ENCODE measurements at regions of chr3 and their contacts with region 1.

Region 1: DNA sequence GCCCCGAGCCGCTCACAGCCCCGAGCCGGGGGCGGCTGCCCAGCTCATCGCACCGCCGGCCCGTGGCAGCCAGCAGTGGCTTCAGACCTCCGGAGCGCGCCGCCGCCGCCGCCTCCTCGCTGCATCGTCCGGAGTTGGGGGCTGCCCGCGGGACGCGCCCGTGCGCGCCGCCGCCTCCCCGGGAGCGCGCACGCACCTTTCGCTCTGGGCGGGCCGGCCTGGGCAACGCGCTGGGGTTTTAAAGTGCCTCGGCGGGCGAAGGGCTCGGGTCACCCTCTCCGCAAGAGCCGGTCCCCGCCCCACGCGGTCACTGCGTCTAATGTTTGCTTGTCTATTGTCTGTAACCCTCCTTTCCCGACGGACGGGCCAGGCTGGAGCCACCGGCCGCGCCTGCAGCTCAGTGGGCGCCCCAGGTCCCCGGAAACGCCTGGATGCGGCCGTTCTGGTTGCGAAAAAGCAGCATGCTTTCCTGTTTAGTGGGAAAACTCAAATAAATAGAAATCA is at the start of gene RYK:
- DNase-seq: peak; percentile 90
- ATAC-seq: peak; percentile 73
- H3K4me3 ChIP-seq: peak within 1 kb of the TSS; percentile 69 to 90 (median 74)
- H3K4me3 Mint-ChIP-seq: peak within 1 kb of the TSS; percentile 93
- H3K27ac ChIP-seq: peak within 1 kb of the TSS; percentile 71 to 82
- H3K27ac Mint-ChIP-seq: peak within 1 kb of the TSS; percentile 93
- H3K4me1 ChIP-seq: peaks cover 29 to 30% of the 10 kb centered on the region in 2 donors
- H3K4me1 Mint-ChIP-seq: peaks cover 49% of the 10 kb centered on the region
- H3K27me3 ChIP-seq: no peaks in the 10 kb centered on the region
- H3K27me3 Mint-ChIP-seq: no peaks in the 10 kb centered on the region
- CTCF ChIP-seq: no peak
- total RNA-seq, gene RYK: 63.9 and 67.7 TPM in 2 replicates

Region 2: DNA sequence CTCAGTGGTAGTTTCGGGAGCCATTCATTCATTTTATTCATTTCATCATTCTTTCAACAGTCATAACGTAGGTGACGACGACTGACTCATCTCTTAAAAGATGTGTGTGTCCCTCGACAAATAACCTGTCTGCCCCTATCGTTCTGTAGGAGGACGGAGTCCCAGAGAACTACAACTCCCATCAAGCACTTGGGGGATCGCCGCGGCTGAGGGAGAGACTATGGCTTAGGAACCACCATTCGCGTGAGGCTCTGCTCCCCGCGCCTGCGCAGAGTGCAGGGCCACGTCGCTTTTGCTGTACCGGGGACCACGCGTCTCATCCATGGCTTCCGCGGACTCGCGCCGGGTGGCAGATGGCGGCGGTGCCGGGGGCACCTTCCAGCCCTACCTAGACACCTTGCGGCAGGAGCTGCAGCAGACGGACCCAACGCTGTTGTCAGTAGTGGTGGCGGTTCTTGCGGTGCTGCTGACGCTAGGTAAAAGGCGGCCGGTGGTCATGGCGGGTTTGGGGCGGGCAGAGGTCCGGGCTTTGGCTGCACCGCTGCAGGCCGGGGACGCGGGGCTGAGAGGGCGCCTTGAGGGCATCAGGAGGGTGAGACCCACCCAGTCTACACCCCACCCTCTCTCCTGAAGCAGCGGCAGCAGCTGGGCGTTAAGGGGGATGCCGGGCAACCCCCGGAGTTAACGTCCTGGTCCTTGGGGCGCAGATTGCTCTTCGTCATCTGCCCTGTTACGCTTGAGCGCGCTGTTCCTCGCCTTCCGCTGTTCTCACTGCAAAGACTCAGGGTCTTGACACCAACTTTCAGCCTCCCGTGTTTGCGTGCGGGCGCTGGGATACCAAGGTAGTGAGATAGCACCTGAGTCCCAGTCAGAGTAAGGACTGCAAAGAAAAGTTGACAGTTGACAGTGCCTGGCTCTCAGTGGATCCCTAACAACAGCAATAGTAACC is 445.0 kb before region 1 on chr3 and contains the start of gene SRPRB:
- CTCF ChIA-PET with region 1: no interaction called
- POLR2A ChIA-PET with region 1: no interaction called
- intact Hi-C with region 1: loop called (anchors 5 kb)
- DNase-seq: peak; percentile 95
- ATAC-seq: peak; percentile 98
- H3K4me3 ChIP-seq: peak within 1 kb of the TSS; percentile 56 to 95 (median 87)
- H3K4me3 Mint-ChIP-seq: peak within 1 kb of the TSS; percentile 99
- H3K27ac ChIP-seq: peak within 1 kb of the TSS; percentile 75 to 80
- H3K27ac Mint-ChIP-seq: peak within 1 kb of the TSS; percentile 94
- H3K4me1 ChIP-seq: peaks cover 11 to 13% of the 10 kb centered on the region in 2 donors
- H3K4me1 Mint-ChIP-seq: peaks cover 18% of the 10 kb centered on the region
- H3K27me3 ChIP-seq: no peaks in the 10 kb centered on the region
- H3K27me3 Mint-ChIP-seq: no peaks in the 10 kb centered on the region
- CTCF ChIP-seq: no peak
- total RNA-seq, gene SRPRB: 28.8 and 29.7 TPM in 2 replicates

Region 3: DNA sequence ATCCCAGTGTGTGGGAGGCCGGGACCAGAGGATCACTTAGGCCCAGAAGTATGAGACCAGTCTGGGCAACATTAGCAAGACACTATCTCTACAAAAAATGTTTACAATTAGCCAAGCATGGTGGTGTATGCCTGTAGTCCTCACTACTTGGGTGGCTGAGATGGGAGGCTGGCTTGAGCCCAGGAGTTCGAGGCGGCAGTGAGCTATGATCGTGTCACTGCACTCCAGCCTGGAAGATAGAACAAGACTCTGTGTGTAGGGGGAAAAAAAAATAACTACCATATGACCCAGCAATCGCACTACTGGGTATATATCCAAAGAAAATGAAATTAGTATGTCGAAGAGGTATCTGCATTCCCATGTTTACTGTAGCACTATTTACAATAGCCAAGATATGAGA is 22.7 kb before region 1 on chr3:
- CTCF ChIA-PET with region 1: interaction called, 5 read pairs
- POLR2A ChIA-PET with region 1: no interaction called
- intact Hi-C with region 1: loop called (anchors 2 kb)
- DNase-seq: no peak
- ATAC-seq: no peak
- H3K4me3 ChIP-seq: no peak overlapping the region
- H3K4me3 Mint-ChIP-seq: no peak overlapping the region
- H3K27ac ChIP-seq: no peak overlapping the region
- H3K27ac Mint-ChIP-seq: no peak overlapping the region
- H3K4me1 ChIP-seq: peaks cover 18 to 25% of the 10 kb centered on the region in 2 donors
- H3K4me1 Mint-ChIP-seq: peaks cover 53% of the 10 kb centered on the region
- H3K27me3 ChIP-seq: no peaks in the 10 kb centered on the region
- H3K27me3 Mint-ChIP-seq: no peaks in the 10 kb centered on the region
- CTCF ChIP-seq: no peak

Region 4: DNA sequence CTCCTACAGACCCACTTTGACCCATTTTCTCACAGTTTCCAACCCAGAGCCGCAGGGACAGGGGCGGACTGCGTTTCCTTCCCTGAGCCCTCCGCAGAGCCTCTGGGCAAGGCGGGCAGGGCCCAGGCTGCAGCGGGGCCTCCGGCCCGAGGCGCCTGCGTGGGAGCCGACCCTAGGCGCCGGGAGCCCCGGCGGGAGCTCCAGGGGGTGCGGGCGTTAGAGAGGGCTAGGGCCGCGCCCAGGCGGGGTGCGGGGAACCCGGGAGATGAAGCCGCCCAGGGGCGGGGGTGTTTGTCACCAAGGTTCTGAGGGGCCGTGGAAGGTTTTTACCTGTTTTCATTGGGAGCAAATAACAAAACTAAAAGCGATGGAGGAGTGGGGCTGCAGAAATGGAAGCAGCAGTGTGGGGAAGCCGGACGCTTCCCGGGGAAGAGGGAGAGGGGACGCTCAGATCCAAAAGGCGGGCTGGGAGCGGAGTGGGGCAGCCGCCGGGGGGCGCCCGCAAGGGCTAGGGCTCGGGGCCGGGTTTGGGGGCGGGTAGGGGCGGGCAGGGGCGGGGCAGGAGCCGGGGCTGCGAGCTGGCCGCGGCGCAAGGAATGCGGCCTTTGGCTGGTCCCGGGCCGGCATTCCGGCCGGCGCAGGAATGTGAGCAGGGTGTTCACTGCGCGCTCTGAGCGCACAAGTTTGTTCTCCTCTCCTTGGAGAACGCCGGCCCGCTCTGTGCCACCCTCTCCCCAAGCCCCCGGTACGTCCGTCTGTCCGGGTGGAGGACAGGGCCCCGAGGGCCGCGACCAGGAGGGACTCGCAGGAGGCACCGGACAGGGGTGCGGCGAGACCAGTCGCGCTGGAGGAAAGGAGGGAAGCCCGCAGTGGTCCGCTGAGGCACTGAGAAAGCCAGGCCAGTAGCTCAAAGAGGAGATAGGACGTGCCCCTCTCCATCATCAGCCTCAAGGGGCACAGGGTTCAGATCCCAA is 62.4 kb after region 1 on chr3:
- CTCF ChIA-PET with region 1: no interaction called
- POLR2A ChIA-PET with region 1: no interaction called
- intact Hi-C with region 1: no loop called
- DNase-seq: no peak
- ATAC-seq: no peak
- H3K4me3 ChIP-seq: peak overlapping the region in 3 of 5 experiments; percentile 17 to 29 (median 18)
- H3K4me3 Mint-ChIP-seq: peak overlapping the region; percentile 39
- H3K27ac ChIP-seq: no peak overlapping the region
- H3K27ac Mint-ChIP-seq: no peak overlapping the region
- H3K4me1 ChIP-seq: peaks cover 2 to 6% of the 10 kb centered on the region in 2 donors
- H3K4me1 Mint-ChIP-seq: peaks cover 2% of the 10 kb centered on the region
- H3K27me3 ChIP-seq: peaks cover 0 to 35% (median 5%) of the 10 kb centered on the region in 4 experiments
- H3K27me3 Mint-ChIP-seq: peaks cover 33% of the 10 kb centered on the region
- CTCF ChIP-seq: no peak

Measured in B cell (primary cell).